ENCODE measurements at regions of chr1 and their contacts with region 1.

Region 1: DNA sequence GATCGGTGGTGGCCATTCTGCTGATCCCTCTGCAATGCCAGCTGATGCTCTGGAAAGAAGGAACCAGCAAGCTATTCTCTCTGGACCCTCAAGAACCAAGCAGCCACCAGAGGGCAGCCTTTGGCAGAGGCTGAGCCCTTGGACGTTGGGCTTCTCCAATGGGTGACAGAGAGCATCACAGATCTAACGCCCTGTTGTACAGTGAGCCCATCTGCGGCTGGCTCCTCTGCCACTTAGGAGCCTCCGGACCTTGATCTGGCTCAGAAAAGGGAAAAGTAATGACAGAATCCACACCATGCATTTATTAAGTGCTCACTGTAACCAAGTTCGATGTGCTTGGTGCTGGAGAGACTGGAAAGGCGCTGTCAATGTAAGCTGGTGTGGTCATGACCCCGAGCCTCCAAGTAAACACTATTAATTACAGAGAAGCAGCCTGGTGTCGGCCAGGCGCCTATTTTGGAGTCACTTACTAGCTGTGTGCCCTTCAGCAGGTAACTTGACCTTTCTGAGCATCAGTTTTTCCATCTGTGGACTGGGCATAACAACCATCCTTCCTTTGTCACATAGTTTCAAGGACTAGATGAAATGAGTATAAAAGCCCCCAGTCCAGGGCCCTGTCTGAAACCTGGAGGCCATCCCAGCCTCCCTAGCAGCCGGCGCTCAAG is 34.9 kb downstream of the ECE1 start:
- DNase-seq: peak; percentile 67 to 82 (median 75)
- ATAC-seq: peak; percentile 92
- H3K4me3 ChIP-seq: no peak overlapping the region
- H3K4me3 Mint-ChIP-seq: no peak overlapping the region
- H3K27ac ChIP-seq: no peak overlapping the region
- H3K27ac Mint-ChIP-seq: peak overlapping the region in 6 of 9 donors; percentile 13 to 87 (median 71)
- H3K4me1 ChIP-seq: peaks cover 4 to 16% of the 10 kb centered on the region in 2 donors
- H3K4me1 Mint-ChIP-seq: peaks cover 15 to 35% (median 28%) of the 10 kb centered on the region in 7 donors
- H3K27me3 ChIP-seq: no peaks in the 10 kb centered on the region
- H3K27me3 Mint-ChIP-seq: no peaks in the 10 kb centered on the region

Region 2: DNA sequence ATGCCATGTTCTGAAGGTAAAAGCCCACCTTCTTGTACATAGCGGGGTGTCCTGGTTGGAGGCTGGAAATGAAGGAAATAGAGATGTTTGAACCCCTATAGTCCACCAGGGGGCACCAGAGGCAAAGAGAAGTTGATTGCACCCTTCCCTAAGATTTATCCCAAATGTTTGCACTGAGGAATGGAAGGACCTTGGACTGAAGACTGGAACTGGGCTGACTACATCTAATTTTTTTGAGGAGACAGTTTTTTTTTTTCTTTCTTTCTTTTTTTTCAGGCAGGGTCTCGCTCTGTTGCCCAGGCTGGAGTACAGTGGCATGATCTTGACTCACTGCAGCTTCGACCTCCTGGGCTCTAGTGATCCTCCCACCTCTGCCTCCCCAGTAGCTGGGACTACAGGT is 23.4 kb before region 1 on chr1:
- CTCF ChIA-PET with region 1: interaction called, 19 read pairs
- POLR2A ChIA-PET with region 1: interaction called, 4 read pairs
- intact Hi-C with region 1: loop called (anchors 1 to 2 kb)
- DNase-seq: peak in 6 of 9 donors; percentile 20 to 53 (median 42)
- ATAC-seq: peak; percentile 76
- H3K4me3 ChIP-seq: no peak overlapping the region
- H3K4me3 Mint-ChIP-seq: no peak overlapping the region
- H3K27ac ChIP-seq: no peak overlapping the region
- H3K27ac Mint-ChIP-seq: peak overlapping the region in 2 of 9 donors; percentile 8 to 29
- H3K4me1 ChIP-seq: no peaks in the 10 kb centered on the region
- H3K4me1 Mint-ChIP-seq: no peaks in the 10 kb centered on the region
- H3K27me3 ChIP-seq: no peaks in the 10 kb centered on the region
- H3K27me3 Mint-ChIP-seq: no peaks in the 10 kb centered on the region

Region 3: DNA sequence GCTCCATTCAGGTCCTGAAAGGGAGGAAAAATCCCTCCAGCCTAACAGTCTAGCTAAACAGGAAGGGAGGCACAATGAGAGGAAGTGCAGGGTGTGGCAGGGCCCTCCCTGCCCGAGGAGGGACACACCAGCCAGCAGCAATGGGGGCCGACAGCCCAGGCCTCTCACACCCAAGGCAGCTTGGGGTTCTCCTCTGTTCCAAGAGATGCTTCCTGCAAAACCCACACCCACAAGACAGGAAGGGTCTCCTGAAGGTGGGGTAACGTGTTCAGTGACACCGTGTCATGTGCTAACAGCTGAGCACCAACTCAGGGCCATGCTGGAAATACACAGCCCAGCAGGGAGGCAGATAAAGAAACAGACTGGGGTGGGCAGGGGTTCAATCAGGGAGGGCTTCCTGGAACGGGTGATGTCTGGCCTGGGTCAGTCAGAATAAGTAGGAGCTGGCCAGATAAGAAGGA is 24.6 kb after region 1 on chr1:
- CTCF ChIA-PET with region 1: interaction called, 11 read pairs
- POLR2A ChIA-PET with region 1: no interaction called
- intact Hi-C with region 1: no loop called
- DNase-seq: peak in 4 of 9 donors; percentile 15 to 22 (median 18)
- ATAC-seq: peak; percentile 68
- H3K4me3 ChIP-seq: peak overlapping the region; percentile 21
- H3K4me3 Mint-ChIP-seq: peak overlapping the region; percentile 61 to 82 (median 75)
- H3K27ac ChIP-seq: peak overlapping the region; percentile 66
- H3K27ac Mint-ChIP-seq: peak overlapping the region; percentile 93 to 99 (median 95)
- H3K4me1 ChIP-seq: peaks cover 34 to 37% of the 10 kb centered on the region in 2 donors
- H3K4me1 Mint-ChIP-seq: peaks cover 29 to 61% (median 54%) of the 10 kb centered on the region in 7 donors
- H3K27me3 ChIP-seq: no peaks in the 10 kb centered on the region
- H3K27me3 Mint-ChIP-seq: no peaks in the 10 kb centered on the region

Region 4: GRCh38 chr1:21334214-21335087 is 79.0 kb after region 1 on chr1:
- CTCF ChIA-PET with region 1: interaction called, 21 read pairs
- POLR2A ChIA-PET with region 1: interaction called, 4 read pairs
- intact Hi-C with region 1: loop called in 1 of 2 experiments (anchors 1 kb)
- DNase-seq: peak; percentile 58 to 84 (median 76)
- ATAC-seq: peak; percentile 88
- H3K4me3 ChIP-seq: peak overlapping the region; percentile 74
- H3K4me3 Mint-ChIP-seq: peak overlapping the region; percentile 82 to 97 (median 91)
- H3K27ac ChIP-seq: peak overlapping the region; percentile 81
- H3K27ac Mint-ChIP-seq: peak overlapping the region; percentile 92 to 99 (median 97)
- H3K4me1 ChIP-seq: peaks cover 41 to 78% of the 10 kb centered on the region in 2 donors
- H3K4me1 Mint-ChIP-seq: peaks cover 55 to 95% (median 85%) of the 10 kb centered on the region in 7 donors
- H3K27me3 ChIP-seq: no peaks in the 10 kb centered on the region
- H3K27me3 Mint-ChIP-seq: no peaks in the 10 kb centered on the region

Region 5: GRCh38 chr1:21520899-21521716 is 265.7 kb after region 1 on chr1:
- CTCF ChIA-PET with region 1: no interaction called
- POLR2A ChIA-PET with region 1: no interaction called
- intact Hi-C with region 1: no loop called
- DNase-seq: no peak
- ATAC-seq: no peak
- H3K4me3 ChIP-seq: no peak overlapping the region
- H3K4me3 Mint-ChIP-seq: no peak overlapping the region
- H3K27ac ChIP-seq: no peak overlapping the region
- H3K27ac Mint-ChIP-seq: no peak overlapping the region
- H3K4me1 ChIP-seq: no peaks in the 10 kb centered on the region
- H3K4me1 Mint-ChIP-seq: peaks cover 0 to 3% (median 0%) of the 10 kb centered on the region in 7 donors
- H3K27me3 ChIP-seq: no peaks in the 10 kb centered on the region
- H3K27me3 Mint-ChIP-seq: peaks cover 0 to 8% (median 0%) of the 10 kb centered on the region in 5 donors

Region 6: GRCh38 chr1:21659099-21659923 is 403.9 kb after region 1 on chr1:
- CTCF ChIA-PET with region 1: no interaction called
- POLR2A ChIA-PET with region 1: no interaction called
- intact Hi-C with region 1: loop called in 1 of 2 experiments (anchors 1 kb)
- DNase-seq: peak; percentile 73 to 91 (median 81)
- ATAC-seq: peak; percentile 99
- H3K4me3 ChIP-seq: peak overlapping the region; percentile 40
- H3K4me3 Mint-ChIP-seq: peak overlapping the region in 7 of 10 donors; percentile 18 to 66 (median 42)
- H3K27ac ChIP-seq: no peak overlapping the region
- H3K27ac Mint-ChIP-seq: peak overlapping the region in 1 of 9 donors; percentile 56
- H3K4me1 ChIP-seq: peaks cover 6% of the 10 kb centered on the region in 2 donors
- H3K4me1 Mint-ChIP-seq: peaks cover 0 to 9% (median 7%) of the 10 kb centered on the region in 7 donors
- H3K27me3 ChIP-seq: no peaks in the 10 kb centered on the region
- H3K27me3 Mint-ChIP-seq: peaks cover 14 to 30% (median 16%) of the 10 kb centered on the region in 5 donors

Region 7: GRCh38 chr1:21814241-21814918 is 559.0 kb after region 1 on chr1:
- CTCF ChIA-PET with region 1: no interaction called
- POLR2A ChIA-PET with region 1: no interaction called
- intact Hi-C with region 1: no loop called
- DNase-seq: peak in 6 of 9 donors; percentile 19 to 46 (median 28)
- ATAC-seq: peak; percentile 80
- H3K4me3 ChIP-seq: peak overlapping the region; percentile 33
- H3K4me3 Mint-ChIP-seq: peak overlapping the region; percentile 45 to 84 (median 71)
- H3K27ac ChIP-seq: no peak overlapping the region
- H3K27ac Mint-ChIP-seq: no peak overlapping the region
- H3K4me1 ChIP-seq: no peaks in the 10 kb centered on the region
- H3K4me1 Mint-ChIP-seq: peaks cover 5 to 14% (median 8%) of the 10 kb centered on the region in 7 donors
- H3K27me3 ChIP-seq: peaks cover 0 to 4% of the 10 kb centered on the region in 2 donors
- H3K27me3 Mint-ChIP-seq: peaks cover 10 to 31% (median 15%) of the 10 kb centered on the region in 5 donors

Region 8: GRCh38 chr1:22064751-22065402 is 809.5 kb after region 1 on chr1:
- CTCF ChIA-PET with region 1: no interaction called
- POLR2A ChIA-PET with region 1: no interaction called
- intact Hi-C with region 1: no loop called
- DNase-seq: no peak
- ATAC-seq: no peak
- H3K4me3 ChIP-seq: peak overlapping the region; percentile 11
- H3K4me3 Mint-ChIP-seq: peak overlapping the region in 9 of 10 donors; percentile 64 to 96 (median 74)
- H3K27ac ChIP-seq: peak overlapping the region; percentile 28
- H3K27ac Mint-ChIP-seq: peak overlapping the region in 7 of 9 donors; percentile 38 to 90 (median 64)
- H3K4me1 ChIP-seq: peaks cover 84 to 85% of the 10 kb centered on the region in 2 donors
- H3K4me1 Mint-ChIP-seq: peaks cover 72 to 93% (median 86%) of the 10 kb centered on the region in 7 donors
- H3K27me3 ChIP-seq: no peaks in the 10 kb centered on the region
- H3K27me3 Mint-ChIP-seq: no peaks in the 10 kb centered on the region